IMR-90 (cell line): ENCODE measurements at regions of chr17 and their contacts with region 1.

Region 1: DNA sequence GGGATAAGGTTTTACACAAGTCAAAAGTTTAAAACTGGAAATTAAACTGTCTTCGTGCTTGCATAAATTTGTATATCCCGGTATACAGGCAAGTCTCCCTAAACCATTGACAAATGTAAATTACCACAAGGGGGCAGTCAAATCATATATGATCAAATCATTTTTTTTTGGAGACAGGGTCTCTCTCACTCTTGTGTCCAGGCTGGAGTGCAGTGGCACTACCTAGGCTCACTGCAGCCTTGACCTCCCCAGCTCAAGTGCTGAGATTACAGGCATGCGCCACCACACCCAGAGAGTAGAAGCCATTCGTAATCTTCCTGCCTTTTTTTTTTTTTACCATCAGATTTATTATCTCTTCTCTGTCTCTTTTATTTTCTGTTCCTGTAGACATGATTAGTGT is 18.5 kb downstream of the TOP2A start:
- DNase-seq: peak; percentile 74
- ATAC-seq: peak; percentile 75
- H3K4me3 ChIP-seq: no peak overlapping the region
- H3K27ac ChIP-seq: no peak overlapping the region
- H3K4me1 ChIP-seq: no peaks in the 10 kb centered on the region
- H3K27me3 ChIP-seq: no peaks in the 10 kb centered on the region
- CTCF ChIP-seq: peak; percentile 65
- POLR2A ChIP-seq: no peak
- RAD21 ChIP-seq: peak; percentile 59

Region 2: GRCh38 chr17:40219073-40219860 is 179.9 kb before region 1 on chr17 and contains the start of gene WIPF2:
- CTCF ChIA-PET with region 1: no interaction called
- POLR2A ChIA-PET with region 1: no interaction called
- dilution Hi-C with region 1: no loop called
- in situ Hi-C with region 1: no loop called
- intact Hi-C with region 1: no loop called
- DNase-seq: peak; percentile 94
- ATAC-seq: peak; percentile 99
- H3K4me3 ChIP-seq: peak within 1 kb of the TSS; percentile 70
- H3K27ac ChIP-seq: peak within 1 kb of the TSS; percentile 91
- H3K4me1 ChIP-seq: peaks cover 5% of the 10 kb centered on the region
- H3K27me3 ChIP-seq: no peaks in the 10 kb centered on the region
- CTCF ChIP-seq: peak; percentile 70
- POLR2A ChIP-seq: peak; percentile 50; the same call in 1 of the 2 replicates
- RAD21 ChIP-seq: no peak
- total RNA-seq, gene WIPF2: 2.0 and 2.8 TPM in 2 replicates

Region 3: GRCh38 chr17:40480501-40481003 is 81.4 kb after region 1 on chr17:
- CTCF ChIA-PET with region 1: no interaction called
- POLR2A ChIA-PET with region 1: interaction called, 3 read pairs
- dilution Hi-C with region 1: no loop called
- in situ Hi-C with region 1: no loop called
- intact Hi-C with region 1: loop called (anchors 1 kb)
- DNase-seq: no peak
- ATAC-seq: no peak
- H3K4me3 ChIP-seq: no peak overlapping the region
- H3K27ac ChIP-seq: no peak overlapping the region; the same call in 1 of the 2 replicates
- H3K4me1 ChIP-seq: peaks cover 24% of the 10 kb centered on the region
- H3K27me3 ChIP-seq: no peaks in the 10 kb centered on the region
- CTCF ChIP-seq: no peak
- POLR2A ChIP-seq: no peak
- RAD21 ChIP-seq: no peak